ENCODE measurements at regions of chr3 and their contacts with region 1.

Region 1: DNA sequence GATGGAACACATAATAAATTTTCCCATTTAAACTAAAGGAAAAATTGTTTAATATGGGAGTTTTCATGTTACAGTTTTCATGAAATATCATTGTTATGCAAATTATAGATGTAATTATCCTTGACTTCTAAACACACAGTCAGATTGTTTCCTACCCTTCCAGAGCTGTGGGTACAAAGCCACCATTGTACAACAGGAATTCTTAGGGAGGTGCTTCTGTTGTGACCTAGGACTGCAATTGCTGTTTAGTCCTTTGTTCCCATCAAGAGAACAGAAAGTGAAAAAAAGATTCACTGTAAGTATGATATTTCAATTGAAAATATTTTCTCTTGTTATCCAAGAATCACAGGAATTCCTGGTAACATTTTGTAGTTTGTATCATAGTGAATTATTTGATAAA is 455.3 kb upstream of the NAALADL2 start:
- DNase-seq: no peak
- ATAC-seq: no peak
- H3K4me3 ChIP-seq: no peak overlapping the region
- H3K27ac ChIP-seq: no peak overlapping the region
- H3K4me1 ChIP-seq: no peaks in the 10 kb centered on the region
- H3K27me3 ChIP-seq: no peaks in the 10 kb centered on the region
- CTCF ChIP-seq: no peak
- POLR2A ChIP-seq: no peak

Region 2: GRCh38 chr3:174884816-174885568 is 481.2 kb after region 1 on chr3:
- in situ Hi-C with region 1: no loop called
- intact Hi-C with region 1: no loop called
- DNase-seq: no peak
- ATAC-seq: no peak
- H3K4me3 ChIP-seq: no peak overlapping the region
- H3K27ac ChIP-seq: no peak overlapping the region
- H3K4me1 ChIP-seq: no peaks in the 10 kb centered on the region
- H3K27me3 ChIP-seq: no peaks in the 10 kb centered on the region
- CTCF ChIP-seq: no peak
- POLR2A ChIP-seq: no peak

Region 3: GRCh38 chr3:175057401-175057800 is 653.6 kb after region 1 on chr3:
- in situ Hi-C with region 1: no loop called
- intact Hi-C with region 1: loop called (anchors 5 kb)
- DNase-seq: no peak
- ATAC-seq: no peak
- H3K4me3 ChIP-seq: no peak overlapping the region
- H3K27ac ChIP-seq: no peak overlapping the region
- H3K4me1 ChIP-seq: no peaks in the 10 kb centered on the region
- H3K27me3 ChIP-seq: no peaks in the 10 kb centered on the region
- CTCF ChIP-seq: no peak
- POLR2A ChIP-seq: no peak